Right ventricle myocardium inferior (tissue), 1 donor: ENCODE measurements at regions of chr3 and their contacts with region 1.

Region 1: DNA sequence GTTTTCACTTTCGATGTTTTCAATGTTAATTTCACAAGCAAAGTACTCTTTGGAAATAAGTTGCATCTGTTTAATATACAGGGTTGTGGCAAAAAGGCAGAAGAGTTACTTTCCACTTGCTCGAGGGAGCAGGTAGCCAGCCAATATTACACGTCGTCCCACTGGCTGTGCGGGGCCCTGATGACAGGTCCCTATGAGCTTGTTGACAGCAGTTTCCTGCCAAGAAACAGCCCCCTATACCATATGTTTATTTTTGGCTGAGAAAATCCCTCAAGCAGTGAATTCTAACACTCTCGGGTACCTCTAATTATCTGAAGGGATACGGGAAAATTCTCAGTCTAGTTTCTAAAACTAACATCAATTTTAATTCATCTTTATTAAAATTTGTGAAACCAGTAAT is 116.8 kb upstream of the SGO1 start:
- DNase-seq: no peak
- ATAC-seq: no peak

Region 2: DNA sequence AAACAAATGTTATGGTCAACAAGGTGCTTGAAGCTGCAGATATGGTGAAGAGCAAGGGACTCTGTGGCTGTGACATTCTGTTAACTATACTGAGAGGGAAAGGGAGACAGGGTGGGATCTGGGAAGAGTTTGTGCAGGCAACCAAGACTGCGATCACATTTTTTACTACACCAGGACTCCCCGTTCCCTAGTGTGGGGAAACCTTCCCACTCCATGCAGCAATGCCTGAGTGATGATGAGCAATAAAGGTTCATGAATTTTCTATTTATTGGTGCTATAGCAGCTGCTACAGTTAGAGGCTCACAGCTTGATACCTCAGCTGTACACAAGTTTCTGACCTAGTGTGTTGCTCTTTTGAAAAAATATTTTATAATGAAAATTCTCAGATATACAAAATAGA is 44.1 kb after region 1 on chr3:
- intact Hi-C with region 1: loop called (anchors 5 kb)
- DNase-seq: no peak
- ATAC-seq: no peak